ENCODE measurements at regions of chr2 and their contacts with region 1.

Region 1: DNA sequence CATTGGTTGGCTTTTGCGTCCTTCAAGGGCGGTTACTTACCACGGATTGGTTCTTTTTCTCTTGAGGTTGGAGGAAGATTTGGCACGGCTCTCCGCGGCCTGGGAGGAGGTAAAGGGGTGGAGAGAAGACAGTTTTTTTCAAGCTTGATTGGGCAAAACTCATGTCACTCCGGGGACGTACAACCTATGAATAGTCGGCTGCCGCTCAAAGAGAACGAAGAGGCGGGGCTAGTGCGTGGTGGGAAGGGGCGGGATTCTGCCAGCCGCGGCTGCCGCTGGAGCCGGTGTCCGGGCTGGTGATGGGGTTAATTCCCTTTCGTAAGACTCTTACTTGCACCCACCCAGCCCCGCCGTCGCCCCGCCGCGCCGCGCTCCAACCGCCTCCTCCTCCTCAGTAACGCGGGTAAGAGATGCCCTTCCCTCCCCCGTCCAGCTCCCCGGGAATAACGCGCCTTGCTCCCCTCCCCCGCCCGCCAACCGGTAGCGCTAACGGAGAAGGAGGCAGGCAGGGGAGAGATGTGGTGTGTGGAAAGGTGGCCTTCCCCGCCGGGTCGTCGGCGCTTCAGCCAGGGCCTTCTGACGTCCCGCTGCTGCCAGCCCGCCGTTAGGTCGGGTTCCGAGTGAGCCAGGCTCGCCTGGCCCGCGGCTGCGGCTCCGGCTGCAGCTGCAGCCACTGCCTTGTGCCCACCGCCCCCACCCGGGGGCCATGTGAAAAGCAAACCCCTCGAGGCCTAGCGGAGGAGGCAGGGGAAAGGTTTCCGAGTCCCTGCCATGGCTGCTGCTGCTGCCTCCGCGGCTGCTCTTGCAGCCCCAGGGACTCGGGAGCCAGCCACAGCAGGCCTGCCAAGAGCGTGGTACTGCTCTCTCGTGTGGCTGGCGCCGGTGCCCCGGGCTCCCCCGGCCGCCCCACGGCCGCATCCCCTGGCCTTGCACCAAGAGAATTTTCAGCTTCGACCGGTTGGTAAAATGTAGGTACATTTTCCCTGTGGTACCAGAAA is at the start of gene R3HDM1:
- DNase-seq: peak; percentile 100
- H3K4me3 ChIP-seq: peak within 1 kb of the TSS; percentile 77 to 92 (median 88)
- H3K27ac ChIP-seq: peak within 1 kb of the TSS; percentile 93
- H3K4me1 ChIP-seq: peaks cover 7% of the 10 kb centered on the region
- H3K27me3 ChIP-seq: no peaks in the 10 kb centered on the region
- CTCF ChIP-seq: peak in 1 of 2 donors; percentile 15
- POLR2A ChIP-seq: peak; percentile 75
- total RNA-seq, gene R3HDM1: 36.2 and 36.6 TPM in 2 replicates

Region 2: DNA sequence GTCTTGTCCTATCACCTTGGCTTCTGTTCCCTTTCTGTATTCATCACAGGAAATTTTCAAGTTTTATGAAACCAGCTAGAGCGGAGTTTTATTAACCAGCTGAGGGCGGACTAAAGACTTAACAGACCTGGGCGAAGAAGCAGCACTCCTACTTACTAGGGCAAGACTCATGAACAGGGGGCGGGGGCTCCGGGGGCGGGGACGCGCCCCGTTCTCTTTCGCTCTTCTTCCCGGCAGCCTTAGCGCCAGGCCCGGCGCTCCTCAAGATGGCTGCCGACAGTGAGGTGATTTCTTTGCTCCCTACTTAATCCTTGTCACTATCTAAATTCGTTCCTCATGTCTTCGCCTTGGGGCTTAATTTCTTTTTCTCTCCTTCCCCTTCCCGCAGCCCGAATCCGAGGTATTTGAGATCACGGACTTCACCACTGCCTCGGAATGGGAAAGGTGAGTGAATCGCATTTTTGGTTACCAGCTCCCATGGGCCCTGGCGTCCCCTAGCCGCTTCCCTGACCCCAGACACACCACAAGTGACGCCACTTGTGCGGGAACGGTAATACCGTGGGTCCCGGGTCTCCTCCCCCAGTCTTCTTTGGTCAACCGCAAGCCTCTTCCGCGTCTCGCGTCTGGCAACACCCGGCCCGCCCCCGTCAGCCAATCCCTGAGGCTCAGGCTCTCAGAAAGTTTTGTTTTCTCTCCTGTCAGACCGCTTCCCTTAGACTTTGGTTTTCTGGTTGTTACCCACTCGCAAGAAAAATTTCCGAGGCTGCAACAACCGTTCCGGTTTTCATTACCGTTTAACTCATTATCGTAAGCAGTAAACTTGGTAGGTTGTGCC is 479.3 kb before region 1 on chr2 and contains the start of gene RAB3GAP1:
- CTCF ChIA-PET with region 1: no interaction called
- POLR2A ChIA-PET with region 1: no interaction called
- dilution Hi-C with region 1: no loop called
- intact Hi-C with region 1: loop called (anchors 2 kb)
- DNase-seq: peak; percentile 90
- H3K4me3 ChIP-seq: peak within 1 kb of the TSS; percentile 54 to 99 (median 87)
- H3K27ac ChIP-seq: peak within 1 kb of the TSS; percentile 83
- H3K4me1 ChIP-seq: peaks cover 30% of the 10 kb centered on the region
- H3K27me3 ChIP-seq: peaks cover 0 to 3% of the 10 kb centered on the region in 2 experiments
- CTCF ChIP-seq: no peak
- POLR2A ChIP-seq: peak; percentile 95
- total RNA-seq, gene RAB3GAP1: 37.2 and 39.5 TPM in 2 replicates

Region 3: GRCh38 chr2:135285391-135285790 is 246.1 kb before region 1 on chr2:
- CTCF ChIA-PET with region 1: no interaction called
- POLR2A ChIA-PET with region 1: no interaction called
- dilution Hi-C with region 1: no loop called
- intact Hi-C with region 1: loop called (anchors 1 kb)
- DNase-seq: no peak
- H3K4me3 ChIP-seq: no peak overlapping the region
- H3K27ac ChIP-seq: no peak overlapping the region
- H3K4me1 ChIP-seq: no peaks in the 10 kb centered on the region
- H3K27me3 ChIP-seq: no peaks in the 10 kb centered on the region
- CTCF ChIP-seq: no peak
- POLR2A ChIP-seq: no peak

Region 4: DNA sequence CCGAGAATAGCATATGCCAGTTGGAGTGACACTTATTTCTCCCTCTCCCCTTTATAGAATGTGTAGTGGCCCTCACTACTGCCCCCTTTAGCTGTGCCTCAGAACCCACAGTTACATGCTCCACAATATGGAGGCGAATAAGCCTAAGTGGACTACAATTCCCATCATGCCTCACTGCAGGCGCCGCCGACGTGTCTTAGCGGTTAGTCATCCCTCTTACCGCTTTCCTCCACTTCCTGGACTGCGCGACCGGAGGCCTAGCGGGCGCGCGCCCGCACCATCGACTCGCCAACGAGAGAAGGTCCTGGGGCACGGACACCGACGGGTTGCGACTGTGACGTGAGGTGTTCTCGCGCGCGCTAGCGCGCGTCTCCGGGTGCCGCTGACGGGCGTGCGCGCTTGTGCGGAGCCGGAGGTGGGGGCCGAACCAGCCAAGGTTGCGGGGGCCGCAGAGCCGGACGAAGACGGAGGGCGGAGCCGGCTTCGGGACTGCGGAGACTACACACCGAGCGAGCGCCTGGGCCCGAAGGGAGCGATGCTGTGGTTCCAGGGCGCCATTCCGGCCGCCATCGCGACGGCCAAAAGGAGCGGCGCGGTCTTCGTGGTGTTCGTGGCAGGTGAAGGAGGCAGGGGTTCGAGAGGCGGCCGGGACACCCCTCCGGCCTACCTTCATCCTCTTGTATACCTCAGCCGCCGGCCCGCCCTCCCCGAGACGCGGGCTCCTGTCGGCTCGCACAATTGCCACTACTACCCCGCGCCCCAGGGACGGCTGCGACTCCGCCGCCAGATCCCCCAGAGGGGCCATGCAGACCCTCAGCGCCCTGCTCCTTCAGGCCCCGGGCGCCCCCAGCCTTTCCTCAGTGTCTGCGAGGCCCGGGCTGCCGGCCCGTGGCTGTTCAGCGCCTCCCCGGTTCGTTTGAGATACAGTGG is 210.1 kb after region 1 on chr2 and contains the start of gene UBXN4:
- CTCF ChIA-PET with region 1: interaction called, 3 read pairs
- POLR2A ChIA-PET with region 1: interaction called, 3 read pairs
- dilution Hi-C with region 1: no loop called
- intact Hi-C with region 1: loop called (anchors 1 kb)
- DNase-seq: peak; percentile 99
- H3K4me3 ChIP-seq: peak within 1 kb of the TSS; percentile 91 to 98 (median 97)
- H3K27ac ChIP-seq: peak within 1 kb of the TSS; percentile 84
- H3K4me1 ChIP-seq: peaks cover 29% of the 10 kb centered on the region
- H3K27me3 ChIP-seq: no peaks in the 10 kb centered on the region
- CTCF ChIP-seq: peak; percentile 63 to 70
- POLR2A ChIP-seq: peak; percentile 79
- total RNA-seq, gene UBXN4: 103 and 108 TPM in 2 replicates